OCI-LY7 (cell line): ENCODE measurements at regions of chr1 and their contacts with region 1.

Region 1: DNA sequence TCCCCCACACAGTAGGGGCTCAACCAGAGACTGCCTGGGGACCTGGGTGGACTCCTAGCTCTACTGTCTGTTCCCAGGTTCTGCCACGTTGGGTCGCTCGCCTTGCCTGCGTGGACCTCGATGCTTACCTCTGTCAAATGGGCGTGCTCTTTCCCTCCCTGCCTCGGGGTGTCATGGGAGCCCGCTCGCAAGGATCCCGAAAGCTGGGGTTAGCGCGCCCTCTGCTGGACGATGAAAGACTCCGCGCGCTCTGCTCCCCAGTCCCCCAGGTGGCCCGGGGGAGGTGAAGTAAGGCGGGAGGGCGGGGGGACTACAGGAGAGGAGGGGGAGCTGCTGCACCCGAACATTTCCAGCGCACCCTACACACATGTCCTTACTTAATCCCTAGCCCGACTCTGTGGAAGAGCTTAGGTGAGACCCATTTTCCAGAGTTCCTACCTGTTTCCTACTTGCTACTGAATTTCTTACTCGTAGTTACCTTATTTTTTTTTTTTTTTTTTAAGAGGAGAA is 2.3 kb upstream of the BSND start:
- DNase-seq: peak; percentile 75
- H3K4me3 ChIP-seq: no peak overlapping the region
- H3K27ac ChIP-seq: no peak overlapping the region
- H3K4me1 ChIP-seq: no peaks in the 10 kb centered on the region
- CTCF ChIP-seq: peak; percentile 88

Region 2: DNA sequence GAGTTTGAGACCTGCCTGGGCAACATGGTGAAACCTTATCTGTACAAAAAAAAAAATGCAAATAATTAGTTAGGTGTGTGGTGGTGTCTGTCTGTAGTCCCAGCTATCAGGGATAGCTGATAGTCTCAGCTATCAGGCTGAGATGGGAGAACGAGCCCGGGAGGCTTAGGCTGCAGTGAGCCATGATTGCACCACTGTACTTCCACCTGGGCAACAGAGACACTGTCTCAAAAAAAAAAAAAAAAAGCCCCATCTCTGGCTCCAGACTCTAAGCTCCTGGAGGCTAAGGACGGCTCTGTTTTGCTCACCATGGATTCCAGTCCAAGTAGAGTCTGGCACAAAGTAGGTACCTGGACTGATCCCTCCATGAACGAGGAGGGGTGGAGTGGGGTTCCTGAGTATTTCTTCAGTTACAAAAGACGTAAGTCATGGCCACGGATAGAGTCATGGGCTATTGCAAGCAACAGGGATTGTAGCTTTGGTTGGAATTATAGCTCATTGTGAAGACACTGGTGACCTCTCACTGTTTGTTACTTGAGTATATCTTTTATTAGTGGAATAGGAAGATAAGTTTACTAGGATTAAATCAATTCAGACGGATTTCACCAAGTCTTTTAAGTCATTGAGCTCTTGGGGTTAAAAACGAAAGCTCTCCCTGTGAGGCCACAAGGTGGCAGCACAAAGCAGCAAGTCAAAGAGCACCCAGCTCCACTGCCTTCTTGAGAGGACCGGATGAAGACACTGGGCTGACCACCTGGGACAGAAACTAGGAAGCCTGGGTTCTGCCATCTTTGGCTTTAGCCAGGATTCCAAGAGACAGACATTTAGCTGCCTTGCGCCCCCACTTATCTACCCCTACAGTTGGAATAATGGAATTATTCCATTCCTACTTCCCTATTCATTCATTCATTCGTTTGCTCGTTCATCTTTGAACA is 51.5 kb before region 1 on chr1:
- CTCF ChIA-PET with region 1: interaction called, 5 read pairs
- POLR2A ChIA-PET with region 1: no interaction called
- intact Hi-C with region 1: loop called (anchors 1 kb)
- DNase-seq: peak; percentile 75
- H3K4me3 ChIP-seq: no peak overlapping the region
- H3K27ac ChIP-seq: no peak overlapping the region
- H3K4me1 ChIP-seq: no peaks in the 10 kb centered on the region
- CTCF ChIP-seq: peak; percentile 93

Region 3: GRCh38 chr1:54950369-54951163 is 45.8 kb before region 1 on chr1:
- CTCF ChIA-PET with region 1: interaction called, 5 read pairs
- POLR2A ChIA-PET with region 1: no interaction called
- intact Hi-C with region 1: loop called (anchors 1 kb)
- DNase-seq: peak; percentile 36
- H3K4me3 ChIP-seq: no peak overlapping the region
- H3K27ac ChIP-seq: no peak overlapping the region
- H3K4me1 ChIP-seq: no peaks in the 10 kb centered on the region
- CTCF ChIP-seq: peak; percentile 81